Psoas muscle (tissue), 8 donors: ENCODE measurements at regions of chr11 and their contacts with region 1.

Region 1: DNA sequence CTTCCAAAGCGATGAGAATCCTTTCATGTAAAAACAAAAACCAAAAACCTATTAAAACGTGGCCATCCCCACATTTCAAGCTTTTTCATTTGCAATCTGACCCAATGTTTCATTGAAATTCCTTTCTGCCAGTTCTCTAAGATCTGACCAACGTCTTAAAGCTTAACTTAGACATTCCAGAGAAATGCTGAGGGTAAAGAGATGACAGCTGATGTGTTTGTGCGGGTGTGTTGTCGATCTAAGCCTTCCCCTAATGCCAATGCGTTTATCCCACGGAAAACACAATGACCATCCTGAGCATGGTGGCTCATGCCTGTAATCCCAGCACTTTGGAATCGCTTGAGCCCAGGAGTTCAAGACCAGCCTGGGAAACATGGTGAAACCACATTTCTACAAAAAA is 6.4 kb upstream of the TESMIN start:
- DNase-seq: no peak
- ATAC-seq: no peak
- H3K4me3 ChIP-seq: no peak overlapping the region
- H3K27ac ChIP-seq: no peak overlapping the region
- H3K4me1 ChIP-seq: no peaks in the 10 kb centered on the region
- H3K27me3 ChIP-seq: peaks cover 0 to 1% (median 0%) of the 10 kb centered on the region in 3 donors
- CTCF ChIP-seq: no peak

Region 2: GRCh38 chr11:68565768-68566167 is 191.9 kb before region 1 on chr11:
- intact Hi-C with region 1: no loop called
- DNase-seq: peak in 1 of 2 donors; percentile 76
- ATAC-seq: peak; percentile 83 to 94 (median 90)
- H3K4me3 ChIP-seq: no peak overlapping the region
- H3K27ac ChIP-seq: peak overlapping the region; percentile 67
- H3K4me1 ChIP-seq: peaks cover 39% of the 10 kb centered on the region
- H3K27me3 ChIP-seq: no peaks in the 10 kb centered on the region
- CTCF ChIP-seq: no peak

Region 3: GRCh38 chr11:68692871-68693483 is 64.7 kb before region 1 on chr11:
- intact Hi-C with region 1: no loop called
- DNase-seq: no peak
- ATAC-seq: no peak
- H3K4me3 ChIP-seq: no peak overlapping the region
- H3K27ac ChIP-seq: no peak overlapping the region
- H3K4me1 ChIP-seq: no peaks in the 10 kb centered on the region
- H3K27me3 ChIP-seq: peaks cover 0 to 14% (median 8%) of the 10 kb centered on the region in 3 donors
- CTCF ChIP-seq: no peak

Region 4: DNA sequence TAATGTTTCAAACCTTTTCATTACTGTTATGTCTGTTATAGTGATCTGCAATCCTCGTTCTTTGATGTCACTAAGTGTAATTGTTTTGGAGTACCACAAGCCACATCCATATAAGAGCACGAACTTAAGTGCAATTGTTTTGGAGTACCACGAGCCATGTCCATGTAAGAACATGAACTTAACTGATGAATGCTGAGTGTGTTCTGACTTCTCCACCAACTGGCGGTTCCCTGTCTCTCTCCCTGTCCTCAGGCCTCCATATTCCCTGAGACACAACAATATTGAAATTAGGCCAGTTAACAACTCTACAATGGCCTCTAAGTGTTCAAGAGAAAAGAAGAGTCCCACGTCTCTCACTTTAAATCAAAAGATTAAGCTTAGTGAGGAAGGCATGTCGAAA is 29.9 kb before region 1 on chr11:
- intact Hi-C with region 1: loop called in 1 of 2 experiments (anchors 1 kb)
- DNase-seq: no peak
- ATAC-seq: no peak
- H3K4me3 ChIP-seq: no peak overlapping the region
- H3K27ac ChIP-seq: no peak overlapping the region
- H3K4me1 ChIP-seq: no peaks in the 10 kb centered on the region
- H3K27me3 ChIP-seq: peaks cover 0 to 4% (median 2%) of the 10 kb centered on the region in 3 donors
- CTCF ChIP-seq: no peak